ENCODE measurements at regions of chr7 and their contacts with region 1.

Region 1: GRCh38 chr7:44087911-44088838 is 5.8 kb upstream of the POLM start:
- DNase-seq: peak; percentile 82
- H3K4me3 ChIP-seq: peak overlapping the region in 1 of 2 experiments; percentile 10; a peak in 1 of 4 replicates
- H3K27ac ChIP-seq: peak overlapping the region; percentile 91 to 100
- H3K4me1 ChIP-seq: peaks cover 14 to 18% of the 10 kb centered on the region in 2 experiments
- H3K27me3 ChIP-seq: no peaks in the 10 kb centered on the region
- CTCF ChIP-seq: no peak
- EP300 ChIP-seq: peak in 1 of 2 experiments; percentile 73; a peak in 1 of 4 replicates
- RAD21 ChIP-seq: no peak

Region 2: GRCh38 chr7:43824963-43825362 is 263.2 kb before region 1 on chr7:
- CTCF ChIA-PET with region 1: no interaction called
- POLR2A ChIA-PET with region 1: no interaction called
- DNase-seq: no peak
- H3K4me3 ChIP-seq: no peak overlapping the region
- H3K27ac ChIP-seq: no peak overlapping the region
- H3K4me1 ChIP-seq: no peaks in the 10 kb centered on the region; a peak in 1 of 4 replicates
- H3K27me3 ChIP-seq: peaks cover 21% of the 10 kb centered on the region; the same call in 1 of the 2 replicates
- CTCF ChIP-seq: no peak
- EP300 ChIP-seq: no peak
- RAD21 ChIP-seq: no peak

Region 3: DNA sequence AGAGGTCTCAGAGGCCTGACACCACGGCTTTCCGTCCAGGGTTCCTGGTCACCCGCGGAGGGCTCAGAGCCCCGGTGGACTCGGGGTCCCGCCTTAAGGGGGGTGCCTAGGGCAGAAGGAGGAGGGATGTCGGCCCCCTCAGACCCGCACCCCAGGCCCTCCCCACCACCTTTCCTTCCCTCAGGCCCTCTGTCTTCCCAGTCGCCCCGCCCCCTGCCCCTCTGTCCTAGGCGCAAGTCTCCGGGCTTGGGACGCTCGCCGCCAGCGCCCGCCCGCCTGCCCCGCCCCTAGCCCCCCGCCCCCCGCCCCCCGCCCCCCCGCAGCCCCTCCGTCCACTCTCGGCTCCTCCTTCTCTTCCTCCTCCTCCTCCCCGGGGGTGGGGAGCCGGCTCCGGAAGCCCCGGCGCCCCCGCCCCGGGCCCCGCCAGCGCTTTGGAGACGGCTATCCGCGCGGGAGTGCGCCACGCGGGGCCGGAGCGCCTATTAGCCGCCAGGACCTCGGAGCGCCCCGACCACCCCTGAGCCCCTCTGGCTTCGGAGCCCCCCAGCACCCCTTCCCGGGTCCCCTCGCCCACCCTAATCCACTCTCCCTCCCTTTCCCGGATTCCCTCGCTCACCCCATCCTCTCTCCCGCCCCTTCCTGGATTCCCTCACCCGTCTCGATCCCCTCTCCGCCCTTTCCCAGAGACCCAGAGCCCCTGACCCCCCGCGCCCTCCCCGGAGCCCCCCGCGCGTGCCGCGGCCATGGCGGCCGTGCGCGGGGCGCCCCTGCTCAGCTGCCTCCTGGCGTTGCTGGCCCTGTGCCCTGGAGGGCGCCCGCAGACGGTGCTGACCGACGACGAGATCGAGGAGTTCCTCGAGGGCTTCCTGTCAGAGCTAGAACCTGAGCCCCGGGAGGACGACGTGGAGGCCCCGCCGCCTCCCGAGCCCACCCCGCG is 16.0 kb after region 1 on chr7 and contains the start of gene AEBP1:
- CTCF ChIA-PET with region 1: interaction called, 15 read pairs
- POLR2A ChIA-PET with region 1: interaction called, 6 read pairs
- DNase-seq: peak; percentile 96
- H3K4me3 ChIP-seq: peak within 1 kb of the TSS; percentile 51 to 66
- H3K27ac ChIP-seq: peak within 1 kb of the TSS; percentile 45 to 93
- H3K4me1 ChIP-seq: peaks cover 27 to 42% of the 10 kb centered on the region in 2 experiments; a peak in 2 of 4 replicates
- H3K27me3 ChIP-seq: no peaks in the 10 kb centered on the region
- CTCF ChIP-seq: 0 out of 2 replicates have a peak, but pooled peaks have one; percentile 18
- EP300 ChIP-seq: no peak
- RAD21 ChIP-seq: peak; percentile 15; the same call in 1 of the 2 replicates
- polyA plus RNA-seq, gene AEBP1: 40.3 and 105 TPM in 2 replicates

Measured in SK-N-SH (cell line).